ENCODE measurements at regions of chr7 and their contacts with region 1.

Region 1: DNA sequence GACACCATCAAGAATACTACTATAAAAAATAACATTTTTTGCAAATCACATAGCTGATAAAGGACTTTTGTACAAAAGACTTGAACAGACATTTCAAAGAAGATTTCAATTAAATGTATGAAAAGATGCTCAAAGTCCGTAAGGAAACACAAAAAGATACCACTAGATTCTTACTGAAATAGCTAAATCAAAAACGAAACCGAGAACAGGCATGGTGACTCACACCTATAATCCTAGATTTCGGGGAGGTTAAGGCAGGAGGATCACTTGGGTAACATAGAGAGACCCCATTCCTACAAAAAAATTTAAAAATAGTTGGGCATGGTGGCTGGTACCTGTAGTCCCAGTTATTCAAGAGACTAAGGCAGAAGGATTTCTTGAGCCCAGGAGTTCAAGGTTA is 520.2 kb upstream of the GRM3 start:
- DNase-seq: no peak
- H3K4me3 ChIP-seq: no peak overlapping the region
- H3K27ac ChIP-seq: no peak overlapping the region
- H3K4me1 ChIP-seq: no peaks in the 10 kb centered on the region
- H3K27me3 ChIP-seq: no peaks in the 10 kb centered on the region
- CTCF ChIP-seq: no peak
- POLR2A ChIP-seq: no peak

Region 2: GRCh38 chr7:86058649-86059048 is 64.8 kb before region 1 on chr7:
- CTCF ChIA-PET with region 1: no interaction called
- POLR2A ChIA-PET with region 1: no interaction called
- dilution Hi-C with region 1: no loop called
- intact Hi-C with region 1: loop called (anchors 10 kb)
- DNase-seq: no peak
- H3K4me3 ChIP-seq: no peak overlapping the region
- H3K27ac ChIP-seq: no peak overlapping the region
- H3K4me1 ChIP-seq: no peaks in the 10 kb centered on the region
- H3K27me3 ChIP-seq: no peaks in the 10 kb centered on the region
- CTCF ChIP-seq: no peak
- POLR2A ChIP-seq: no peak

Region 3: GRCh38 chr7:86137343-86137742 is 13.9 kb after region 1 on chr7:
- CTCF ChIA-PET with region 1: no interaction called
- POLR2A ChIA-PET with region 1: no interaction called
- dilution Hi-C with region 1: no loop called
- intact Hi-C with region 1: no loop called
- DNase-seq: no peak
- H3K4me3 ChIP-seq: no peak overlapping the region
- H3K27ac ChIP-seq: no peak overlapping the region
- H3K4me1 ChIP-seq: no peaks in the 10 kb centered on the region
- H3K27me3 ChIP-seq: no peaks in the 10 kb centered on the region
- CTCF ChIP-seq: no peak
- POLR2A ChIP-seq: no peak